ENCODE measurements at regions of chr1 and their contacts with region 1.

Region 1: DNA sequence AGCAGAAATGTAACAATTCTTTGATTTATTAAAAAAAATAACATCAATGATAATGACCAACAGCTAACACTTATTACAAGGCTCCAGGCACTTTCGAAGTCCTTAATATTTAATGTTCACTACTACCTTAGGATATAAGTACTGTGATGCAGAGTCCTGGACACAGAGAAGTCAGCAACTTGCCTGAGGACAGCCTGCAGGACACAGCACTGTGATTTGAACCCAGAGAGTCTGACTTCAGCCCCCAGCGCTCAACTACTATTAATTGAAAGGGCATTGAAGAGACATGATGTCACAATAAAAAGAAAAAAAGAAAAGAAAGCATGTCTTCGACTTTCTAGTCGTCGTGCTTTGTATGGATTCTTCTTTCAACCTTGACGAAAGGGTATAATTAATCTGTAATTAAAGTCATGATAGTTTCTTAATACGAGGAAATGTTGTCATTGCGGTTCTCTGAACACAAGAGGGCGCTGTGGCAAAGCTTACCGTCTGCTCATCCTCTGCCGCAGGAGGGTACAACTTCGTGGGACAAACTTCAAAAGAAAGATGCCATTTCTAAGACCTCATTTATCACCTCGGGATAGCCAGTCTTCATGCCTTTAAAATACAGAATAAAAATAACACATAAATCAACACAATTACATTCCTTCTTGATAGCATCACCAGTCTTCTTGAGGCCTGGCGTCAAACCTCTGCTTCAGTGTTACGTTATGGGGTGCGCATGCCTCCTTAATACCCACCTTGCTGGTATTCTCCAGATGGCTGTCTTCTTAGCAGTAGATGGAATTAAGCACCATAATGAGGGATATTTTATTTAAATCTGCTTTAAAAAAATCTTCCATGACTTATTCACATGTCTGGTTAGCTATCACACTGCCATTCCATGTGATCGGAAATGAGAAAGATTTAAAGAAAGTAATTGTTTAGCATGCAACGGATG is 240.1 kb downstream of the DISC1 start:
- DNase-seq: peak; percentile 23 to 63 (median 46)
- ATAC-seq: peak; percentile 75
- H3K4me3 ChIP-seq: no peak overlapping the region
- H3K4me3 Mint-ChIP-seq: peak overlapping the region in 6 of 10 donors; percentile 6 to 72 (median 32)
- H3K27ac ChIP-seq: no peak overlapping the region
- H3K27ac Mint-ChIP-seq: peak overlapping the region in 3 of 9 donors; percentile 13 to 77 (median 16)
- H3K4me1 ChIP-seq: no peaks in the 10 kb centered on the region
- H3K4me1 Mint-ChIP-seq: peaks cover 9 to 57% (median 53%) of the 10 kb centered on the region in 7 donors
- H3K27me3 ChIP-seq: no peaks in the 10 kb centered on the region
- H3K27me3 Mint-ChIP-seq: no peaks in the 10 kb centered on the region

Region 2: DNA sequence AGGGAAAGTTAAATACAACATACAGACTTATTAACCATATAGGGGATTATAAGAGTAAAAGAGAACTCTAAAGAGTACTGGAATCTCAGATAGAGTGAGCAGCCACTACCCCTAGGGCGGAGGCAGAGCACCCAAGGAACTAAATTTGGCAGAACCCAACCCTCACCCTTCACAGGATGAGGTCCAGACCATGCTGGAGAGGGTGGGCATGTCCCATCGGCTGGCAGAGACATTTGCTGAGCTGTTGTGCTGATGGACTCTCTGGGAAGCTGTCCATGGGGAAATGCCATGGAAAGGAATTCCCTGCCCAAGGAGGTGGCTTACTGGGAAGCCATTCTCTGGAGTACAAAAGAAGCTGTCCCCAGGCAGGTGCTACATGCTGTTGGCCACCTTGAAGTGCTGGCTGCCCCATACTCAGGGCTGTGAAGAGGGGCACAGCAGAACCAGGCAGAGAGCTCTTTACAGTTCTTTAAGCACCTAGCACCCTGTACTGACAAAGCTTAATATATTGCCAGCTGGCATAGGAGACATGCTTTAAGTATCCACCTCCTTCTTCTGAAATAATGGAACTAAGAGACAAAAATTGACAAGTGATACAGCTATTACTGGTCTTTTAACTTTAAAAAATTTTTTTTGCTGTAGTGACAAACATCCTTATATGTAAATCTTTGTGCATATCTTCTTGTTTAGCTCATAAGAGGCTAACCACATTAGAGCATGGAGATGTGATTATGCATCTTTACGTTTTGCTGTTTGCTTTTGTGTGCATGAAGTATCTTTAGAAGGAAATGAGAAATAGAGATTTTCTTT is 308.6 kb before region 1 on chr1:
- CTCF ChIA-PET with region 1: no interaction called
- POLR2A ChIA-PET with region 1: no interaction called
- intact Hi-C with region 1: no loop called
- DNase-seq: no peak
- ATAC-seq: no peak
- H3K4me3 ChIP-seq: no peak overlapping the region
- H3K4me3 Mint-ChIP-seq: no peak overlapping the region
- H3K27ac ChIP-seq: no peak overlapping the region
- H3K27ac Mint-ChIP-seq: peak overlapping the region in 1 of 9 donors; percentile 5
- H3K4me1 ChIP-seq: no peaks in the 10 kb centered on the region
- H3K4me1 Mint-ChIP-seq: peaks cover 10 to 37% (median 26%) of the 10 kb centered on the region in 7 donors
- H3K27me3 ChIP-seq: no peaks in the 10 kb centered on the region
- H3K27me3 Mint-ChIP-seq: no peaks in the 10 kb centered on the region

Region 3: GRCh38 chr1:231931846-231932454 is 65.3 kb after region 1 on chr1:
- CTCF ChIA-PET with region 1: interaction called, 35 read pairs
- POLR2A ChIA-PET with region 1: no interaction called
- intact Hi-C with region 1: loop called in 1 of 2 experiments (anchors 1 kb)
- DNase-seq: peak in 3 of 9 donors; percentile 10 to 29 (median 23)
- ATAC-seq: no peak
- H3K4me3 ChIP-seq: no peak overlapping the region
- H3K4me3 Mint-ChIP-seq: no peak overlapping the region
- H3K27ac ChIP-seq: no peak overlapping the region
- H3K27ac Mint-ChIP-seq: no peak overlapping the region
- H3K4me1 ChIP-seq: peaks cover 7 to 18% of the 10 kb centered on the region in 2 donors
- H3K4me1 Mint-ChIP-seq: peaks cover 5 to 39% (median 27%) of the 10 kb centered on the region in 7 donors
- H3K27me3 ChIP-seq: no peaks in the 10 kb centered on the region
- H3K27me3 Mint-ChIP-seq: peaks cover 0 to 15% (median 0%) of the 10 kb centered on the region in 5 donors

Region 4: GRCh38 chr1:232090816-232091215 is 224.2 kb after region 1 on chr1:
- CTCF ChIA-PET with region 1: no interaction called
- POLR2A ChIA-PET with region 1: no interaction called
- intact Hi-C with region 1: no loop called
- DNase-seq: no peak
- ATAC-seq: no peak
- H3K4me3 ChIP-seq: no peak overlapping the region
- H3K4me3 Mint-ChIP-seq: no peak overlapping the region
- H3K27ac ChIP-seq: no peak overlapping the region
- H3K27ac Mint-ChIP-seq: no peak overlapping the region
- H3K4me1 ChIP-seq: no peaks in the 10 kb centered on the region
- H3K4me1 Mint-ChIP-seq: peaks cover 0 to 4% (median 0%) of the 10 kb centered on the region in 7 donors
- H3K27me3 ChIP-seq: no peaks in the 10 kb centered on the region
- H3K27me3 Mint-ChIP-seq: peaks cover 0 to 4% (median 0%) of the 10 kb centered on the region in 5 donors

Region 5: GRCh38 chr1:232127190-232127589 is 260.5 kb after region 1 on chr1:
- CTCF ChIA-PET with region 1: no interaction called
- POLR2A ChIA-PET with region 1: no interaction called
- intact Hi-C with region 1: loop called in 1 of 2 experiments (anchors 5 kb)
- DNase-seq: no peak
- ATAC-seq: no peak
- H3K4me3 ChIP-seq: no peak overlapping the region
- H3K4me3 Mint-ChIP-seq: no peak overlapping the region
- H3K27ac ChIP-seq: no peak overlapping the region
- H3K27ac Mint-ChIP-seq: no peak overlapping the region
- H3K4me1 ChIP-seq: no peaks in the 10 kb centered on the region
- H3K4me1 Mint-ChIP-seq: peaks cover 4 to 16% (median 8%) of the 10 kb centered on the region in 7 donors
- H3K27me3 ChIP-seq: no peaks in the 10 kb centered on the region
- H3K27me3 Mint-ChIP-seq: peaks cover 17 to 34% (median 25%) of the 10 kb centered on the region in 5 donors

Region 6: DNA sequence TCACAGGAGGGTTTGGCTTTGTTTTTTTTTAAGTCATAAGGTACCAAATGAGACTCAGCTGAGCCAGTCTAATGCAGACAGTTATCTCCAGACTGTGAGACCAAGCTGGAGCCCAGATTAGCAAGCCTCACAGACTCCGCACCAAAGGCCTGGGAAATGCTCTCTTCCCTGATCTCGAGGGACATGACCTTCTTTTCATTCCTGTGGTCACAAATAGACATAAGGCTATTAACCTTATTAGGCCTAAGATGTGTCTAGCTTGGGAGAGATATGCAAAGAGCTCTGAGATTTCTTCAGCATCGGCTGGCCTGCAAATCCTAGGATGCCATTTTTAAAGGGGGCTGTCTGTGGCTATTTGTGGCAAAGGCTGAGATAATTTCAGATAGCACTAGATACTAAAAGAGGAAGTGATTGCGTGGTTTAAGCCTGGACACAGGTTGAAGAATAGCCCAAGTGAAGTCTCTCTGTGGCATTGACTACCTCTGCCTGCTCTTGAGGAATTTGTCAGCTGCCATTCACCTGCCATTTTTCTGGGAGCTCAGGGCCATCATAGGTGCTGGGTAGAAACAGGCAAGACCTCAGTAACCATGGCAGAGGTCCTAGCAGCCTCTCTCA is 461.9 kb after region 1 on chr1:
- CTCF ChIA-PET with region 1: no interaction called
- POLR2A ChIA-PET with region 1: no interaction called
- intact Hi-C with region 1: loop called in 1 of 2 experiments (anchors 10 kb)
- DNase-seq: no peak
- ATAC-seq: no peak
- H3K4me3 ChIP-seq: no peak overlapping the region
- H3K4me3 Mint-ChIP-seq: no peak overlapping the region
- H3K27ac ChIP-seq: no peak overlapping the region
- H3K27ac Mint-ChIP-seq: no peak overlapping the region
- H3K4me1 ChIP-seq: no peaks in the 10 kb centered on the region
- H3K4me1 Mint-ChIP-seq: peaks cover 0 to 5% (median under 1%) of the 10 kb centered on the region in 7 donors
- H3K27me3 ChIP-seq: no peaks in the 10 kb centered on the region
- H3K27me3 Mint-ChIP-seq: peaks cover 0 to 15% (median 7%) of the 10 kb centered on the region in 5 donors

Region 7: DNA sequence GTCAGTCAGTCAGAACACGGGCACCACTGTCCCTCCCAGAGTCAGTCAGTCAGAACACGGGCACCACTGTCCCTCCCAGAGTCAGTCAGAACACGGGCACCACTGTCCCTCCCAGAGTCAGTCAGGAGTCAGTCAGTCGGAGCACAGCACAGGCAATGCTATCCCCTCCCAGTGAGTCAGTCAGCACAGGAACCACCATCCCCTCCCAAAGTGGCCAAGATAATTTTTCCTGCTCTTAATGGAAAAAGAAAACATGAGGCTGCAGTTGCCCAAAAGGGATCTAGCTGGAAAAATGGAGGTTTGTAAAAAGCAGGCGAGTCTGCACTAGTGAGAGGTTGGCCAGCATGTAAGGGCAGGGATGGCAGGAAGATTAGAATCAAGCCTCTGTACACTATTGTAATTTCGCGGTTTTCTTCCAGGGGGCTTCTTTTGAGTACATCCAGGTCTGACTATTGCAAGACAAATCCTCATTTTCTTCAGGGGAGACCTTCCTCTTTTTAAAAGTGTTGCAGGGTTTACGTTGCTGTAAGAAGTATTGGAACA is 549.4 kb after region 1 on chr1:
- CTCF ChIA-PET with region 1: no interaction called
- POLR2A ChIA-PET with region 1: no interaction called
- intact Hi-C with region 1: no loop called
- DNase-seq: no peak
- ATAC-seq: no peak
- H3K4me3 ChIP-seq: no peak overlapping the region
- H3K4me3 Mint-ChIP-seq: no peak overlapping the region
- H3K27ac ChIP-seq: no peak overlapping the region
- H3K27ac Mint-ChIP-seq: no peak overlapping the region
- H3K4me1 ChIP-seq: no peaks in the 10 kb centered on the region
- H3K4me1 Mint-ChIP-seq: no peaks in the 10 kb centered on the region
- H3K27me3 ChIP-seq: no peaks in the 10 kb centered on the region
- H3K27me3 Mint-ChIP-seq: peaks cover 0 to 22% (median 11%) of the 10 kb centered on the region in 5 donors

Region 8: DNA sequence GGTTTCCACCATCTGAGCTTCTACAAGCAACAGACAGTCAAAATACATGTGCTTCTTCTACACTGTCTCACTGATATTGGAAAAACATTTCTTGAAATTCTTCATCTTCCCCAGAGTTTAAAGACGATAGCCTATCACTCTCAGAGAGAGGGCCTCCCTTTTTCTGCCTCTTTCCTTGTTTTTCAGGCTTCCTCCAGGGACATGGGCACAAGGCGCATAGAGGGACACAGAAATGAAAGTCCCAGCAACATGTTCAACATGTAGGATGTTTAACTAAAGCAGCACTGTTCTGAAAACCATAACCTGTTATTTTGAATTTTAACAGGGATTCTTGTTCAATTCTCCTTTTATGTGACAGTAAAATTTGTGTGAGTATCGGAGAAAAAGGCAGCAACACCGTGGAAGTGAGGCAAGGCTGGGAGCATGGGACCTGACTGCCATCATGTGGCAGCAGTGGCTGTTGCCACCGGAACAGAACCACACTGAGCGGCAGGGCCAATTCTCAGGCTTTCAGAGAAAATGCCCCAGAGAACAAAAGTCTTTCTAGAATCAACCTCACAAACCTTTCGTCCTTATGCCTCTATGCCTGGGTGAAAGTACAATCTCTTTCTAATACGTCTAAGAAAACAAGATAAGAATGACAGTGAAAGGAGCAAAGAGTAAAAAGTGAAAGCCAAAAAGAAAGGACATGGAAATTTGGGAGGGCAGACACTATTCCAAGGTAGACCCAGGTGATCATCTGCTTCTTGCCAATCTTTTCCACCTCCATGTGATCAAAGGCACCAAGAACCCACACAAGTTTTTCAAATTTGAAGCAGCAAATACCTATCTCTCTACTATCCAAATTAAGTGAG is 1374.4 kb after region 1 on chr1:
- CTCF ChIA-PET with region 1: no interaction called
- POLR2A ChIA-PET with region 1: no interaction called
- intact Hi-C with region 1: loop called (anchors 5 to 10 kb)
- DNase-seq: peak in 4 of 9 donors; percentile 17 to 33 (median 22)
- ATAC-seq: peak; percentile 69
- H3K4me3 ChIP-seq: no peak overlapping the region
- H3K4me3 Mint-ChIP-seq: no peak overlapping the region
- H3K27ac ChIP-seq: no peak overlapping the region
- H3K27ac Mint-ChIP-seq: no peak overlapping the region
- H3K4me1 ChIP-seq: no peaks in the 10 kb centered on the region
- H3K4me1 Mint-ChIP-seq: peaks cover 0 to 19% (median 0%) of the 10 kb centered on the region in 7 donors
- H3K27me3 ChIP-seq: no peaks in the 10 kb centered on the region
- H3K27me3 Mint-ChIP-seq: no peaks in the 10 kb centered on the region

Measured in naive thymus-derived CD4-positive, alpha-beta T cell (primary cell).